ENCODE measurements at regions of chr22 and their contacts with region 1.

Region 1: DNA sequence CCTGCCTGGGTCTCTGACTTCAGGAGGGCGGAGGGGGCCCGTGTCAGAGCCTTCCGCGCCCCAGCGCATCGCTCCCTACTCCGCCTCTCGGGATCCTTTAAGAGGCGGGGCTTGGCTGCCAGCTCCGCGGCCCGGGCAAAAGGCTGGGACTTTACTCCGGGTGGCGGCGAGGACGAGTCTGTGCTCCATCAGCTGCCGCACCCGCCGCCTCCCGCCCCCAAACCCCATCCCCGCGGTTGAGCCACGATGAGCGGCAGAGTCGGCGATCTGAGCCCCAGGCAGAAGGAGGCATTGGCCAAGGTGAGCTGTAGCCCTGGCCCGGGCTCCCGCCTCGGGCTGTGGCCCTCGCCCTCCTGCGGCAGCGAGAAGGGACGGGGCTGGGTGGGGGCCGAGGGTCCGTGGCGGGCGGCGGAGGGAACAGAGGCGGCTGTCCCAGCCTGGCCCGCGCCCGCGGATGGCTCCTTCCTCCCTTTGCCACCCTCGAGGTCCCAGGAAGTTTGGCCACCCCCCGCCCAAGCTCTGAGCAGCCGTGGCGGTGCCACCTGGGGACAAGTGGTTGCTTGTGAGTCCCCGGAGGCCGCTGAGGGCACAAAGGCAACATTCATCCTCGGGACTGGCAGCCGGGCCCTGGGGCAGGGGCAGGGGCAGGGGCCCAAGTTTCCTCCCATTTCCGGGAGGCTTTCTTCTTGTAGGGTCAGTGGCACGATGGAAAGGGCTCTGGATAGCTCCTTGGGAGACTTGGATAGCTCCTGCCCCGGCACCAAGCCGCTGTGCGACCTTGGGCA is at the start of gene SEC14L2:
- DNase-seq: peak; percentile 19 to 72 (median 58)
- ATAC-seq: peak; percentile 75 to 79
- H3K4me3 Mint-ChIP-seq: peak within 1 kb of the TSS; percentile 82 to 95 (median 90)
- H3K27ac Mint-ChIP-seq: peak within 1 kb of the TSS; percentile 78 to 96 (median 92)
- H3K4me1 Mint-ChIP-seq: peaks cover 30 to 66% (median 56%) of the 10 kb centered on the region in 4 donors
- H3K27me3 Mint-ChIP-seq: peaks cover 0 to 6% (median 0%) of the 10 kb centered on the region in 5 donors
- polyA plus RNA-seq, gene SEC14L2: 16.8 to 25.9 (median 22.5) TPM

Region 2: GRCh38 chr22:30413745-30414524 is 16.9 kb after region 1 on chr22:
- POLR2A ChIA-PET with region 1: interaction called, 60 read pairs
- DNase-seq: peak in 2 of 10 donors; percentile 35 to 45
- ATAC-seq: peak; percentile 87
- H3K4me3 Mint-ChIP-seq: peak overlapping the region; percentile 0 to 84 (median 63)
- H3K27ac Mint-ChIP-seq: peak overlapping the region; percentile 87 to 97 (median 94)
- H3K4me1 Mint-ChIP-seq: peaks cover 24 to 68% (median 46%) of the 10 kb centered on the region in 4 donors
- H3K27me3 Mint-ChIP-seq: no peaks in the 10 kb centered on the region

Region 3: DNA sequence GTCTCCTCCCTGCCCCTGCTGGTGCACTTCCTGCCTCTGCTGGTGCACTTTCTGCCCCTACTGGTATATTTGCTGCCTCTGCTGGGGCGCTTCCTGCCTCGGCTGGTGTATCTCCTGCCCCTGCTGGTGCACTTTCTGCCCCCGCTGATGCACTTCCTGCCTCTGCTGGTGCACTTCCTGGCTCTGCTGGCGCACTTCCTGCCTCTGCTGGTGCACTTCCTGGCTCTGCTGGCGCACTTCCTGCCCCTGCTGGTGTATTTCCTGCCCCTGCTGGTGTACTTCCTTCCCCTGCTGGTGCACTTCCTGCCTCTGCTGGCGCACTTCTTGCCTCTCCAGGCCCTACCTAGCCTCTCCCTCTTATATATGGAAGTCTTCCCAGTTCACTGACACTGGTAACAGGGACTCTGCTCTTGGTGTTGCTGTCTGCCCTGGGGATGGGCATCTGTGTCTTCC is 38.6 kb after region 1 on chr22:
- POLR2A ChIA-PET with region 1: interaction called, 32 read pairs
- DNase-seq: peak; percentile 75 to 98 (median 92)
- ATAC-seq: peak; percentile 91
- H3K4me3 Mint-ChIP-seq: peak overlapping the region; percentile 73 to 93 (median 84)
- H3K27ac Mint-ChIP-seq: peak overlapping the region; percentile 94 to 100 (median 100)
- H3K4me1 Mint-ChIP-seq: peaks cover 12 to 23% (median 18%) of the 10 kb centered on the region in 4 donors
- H3K27me3 Mint-ChIP-seq: peaks cover 13 to 30% (median 16%) of the 10 kb centered on the region in 5 donors

Measured in naive thymus-derived CD8-positive, alpha-beta T cell (primary cell).